ENCODE measurements at regions of chr15 and their contacts with region 1.

Region 1: DNA sequence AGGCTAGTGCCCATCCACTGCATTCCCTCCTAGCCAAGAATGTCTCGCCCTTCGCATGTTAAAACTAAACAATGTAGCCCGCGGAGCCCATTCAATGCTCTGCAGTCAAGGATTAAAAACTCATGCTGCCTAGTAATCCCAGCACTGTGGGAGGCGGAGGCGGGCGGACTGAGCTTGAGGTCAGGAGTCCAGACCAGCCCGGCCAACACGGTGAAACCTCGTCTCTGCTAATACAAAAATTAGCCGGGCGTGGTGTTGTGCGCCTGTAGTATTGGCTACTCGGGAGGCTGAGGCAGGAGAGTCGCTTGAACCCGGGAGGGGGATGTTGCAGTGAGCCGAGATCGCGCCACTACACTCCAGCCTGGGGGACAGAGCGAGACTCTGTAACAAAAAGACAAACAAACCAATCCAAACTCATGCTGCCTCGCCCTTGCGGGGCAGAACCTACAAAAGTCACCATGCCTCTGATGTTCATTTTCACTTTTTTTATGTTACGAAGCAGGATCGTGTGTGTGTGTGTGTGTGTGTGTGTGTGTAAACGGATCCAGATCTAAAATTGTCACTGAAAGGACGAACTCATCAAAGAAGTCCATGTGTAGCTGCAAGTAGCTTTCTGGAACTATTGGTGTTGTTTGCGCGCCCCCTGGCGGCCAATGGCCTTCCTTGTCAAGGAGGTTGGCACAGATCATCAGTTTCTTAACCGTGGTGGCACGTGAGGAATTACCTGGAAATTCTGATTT is 54.8 kb upstream of the SPESP1 start:
- DNase-seq: peak; percentile 91
- H3K4me3 ChIP-seq: peak overlapping the region in 2 of 3 experiments; percentile 6 to 24
- H3K27ac ChIP-seq: no peak overlapping the region
- H3K4me1 ChIP-seq: no peaks in the 10 kb centered on the region
- H3K27me3 ChIP-seq: peaks cover 7 to 9% of the 10 kb centered on the region in 2 experiments
- CTCF ChIP-seq: peak; percentile 83 to 84
- POLR2A ChIP-seq: no peak

Region 2: GRCh38 chr15:68559345-68560310 is 315.9 kb before region 1 on chr15:
- CTCF ChIA-PET with region 1: interaction called, 88 read pairs
- POLR2A ChIA-PET with region 1: interaction called, 4 read pairs
- dilution Hi-C with region 1: no loop called
- intact Hi-C with region 1: loop called (anchors 1 kb)
- DNase-seq: peak; percentile 78
- H3K4me3 ChIP-seq: peak overlapping the region in 2 of 3 experiments; percentile 19 to 46
- H3K27ac ChIP-seq: no peak overlapping the region
- H3K4me1 ChIP-seq: peaks cover 4% of the 10 kb centered on the region
- H3K27me3 ChIP-seq: peaks cover 4 to 7% of the 10 kb centered on the region in 2 experiments
- CTCF ChIP-seq: peak; percentile 98 to 99
- POLR2A ChIP-seq: no peak

Region 3: GRCh38 chr15:68783226-68784058 is 92.1 kb before region 1 on chr15:
- CTCF ChIA-PET with region 1: interaction called, 45 read pairs
- POLR2A ChIA-PET with region 1: no interaction called
- dilution Hi-C with region 1: no loop called
- intact Hi-C with region 1: loop called (anchors 1 kb)
- DNase-seq: peak; percentile 32
- H3K4me3 ChIP-seq: no peak overlapping the region
- H3K27ac ChIP-seq: no peak overlapping the region
- H3K4me1 ChIP-seq: peaks cover 14% of the 10 kb centered on the region
- H3K27me3 ChIP-seq: no peaks in the 10 kb centered on the region
- CTCF ChIP-seq: peak; percentile 39 to 73
- POLR2A ChIP-seq: no peak

Region 4: DNA sequence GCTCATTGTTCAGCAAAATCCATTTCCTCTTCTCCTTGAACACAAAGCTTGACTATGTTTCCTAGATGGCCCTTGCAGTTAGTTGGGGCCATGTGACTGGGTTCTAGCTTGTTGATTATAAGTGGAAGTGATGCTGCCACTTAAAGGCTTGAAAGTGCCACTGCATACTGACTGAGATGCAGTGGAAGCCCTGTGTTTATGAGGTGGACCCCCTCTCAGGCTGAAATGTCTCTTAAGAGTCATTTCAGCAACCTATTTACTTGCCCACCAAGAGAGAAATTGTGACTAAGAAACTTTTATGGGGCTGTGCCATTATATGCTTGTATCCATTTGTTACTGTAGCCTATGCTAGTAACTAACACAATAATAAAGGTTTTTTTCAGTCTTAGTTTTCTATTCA is 46.5 kb before region 1 on chr15:
- CTCF ChIA-PET with region 1: interaction called, 24 read pairs
- POLR2A ChIA-PET with region 1: interaction called, 3 read pairs
- dilution Hi-C with region 1: no loop called
- intact Hi-C with region 1: no loop called
- DNase-seq: peak; percentile 81
- H3K4me3 ChIP-seq: no peak overlapping the region
- H3K27ac ChIP-seq: no peak overlapping the region
- H3K4me1 ChIP-seq: no peaks in the 10 kb centered on the region
- H3K27me3 ChIP-seq: peaks cover 13 to 19% of the 10 kb centered on the region in 2 experiments
- CTCF ChIP-seq: peak; percentile 29 to 57
- POLR2A ChIP-seq: no peak

Region 5: GRCh38 chr15:68862415-68862814 is 13.1 kb before region 1 on chr15:
- CTCF ChIA-PET with region 1: interaction called, 30 read pairs
- POLR2A ChIA-PET with region 1: no interaction called
- dilution Hi-C with region 1: no loop called
- intact Hi-C with region 1: no loop called
- DNase-seq: no peak
- H3K4me3 ChIP-seq: no peak overlapping the region
- H3K27ac ChIP-seq: no peak overlapping the region
- H3K4me1 ChIP-seq: no peaks in the 10 kb centered on the region
- H3K27me3 ChIP-seq: peaks cover 12 to 13% of the 10 kb centered on the region in 2 experiments
- CTCF ChIP-seq: no peak
- POLR2A ChIP-seq: no peak

Region 6: GRCh38 chr15:68983961-68984481 is 108.5 kb after region 1 on chr15:
- CTCF ChIA-PET with region 1: no interaction called
- POLR2A ChIA-PET with region 1: no interaction called
- dilution Hi-C with region 1: no loop called
- intact Hi-C with region 1: no loop called
- DNase-seq: no peak
- H3K4me3 ChIP-seq: no peak overlapping the region
- H3K27ac ChIP-seq: no peak overlapping the region
- H3K4me1 ChIP-seq: no peaks in the 10 kb centered on the region
- H3K27me3 ChIP-seq: peaks cover 0 to 3% of the 10 kb centered on the region in 2 experiments
- CTCF ChIP-seq: no peak
- POLR2A ChIP-seq: no peak

Region 7: GRCh38 chr15:68997930-68998777 is 122.6 kb after region 1 on chr15:
- CTCF ChIA-PET with region 1: no interaction called
- POLR2A ChIA-PET with region 1: no interaction called
- dilution Hi-C with region 1: no loop called
- intact Hi-C with region 1: no loop called
- DNase-seq: no peak
- H3K4me3 ChIP-seq: no peak overlapping the region
- H3K27ac ChIP-seq: no peak overlapping the region
- H3K4me1 ChIP-seq: no peaks in the 10 kb centered on the region
- H3K27me3 ChIP-seq: peaks cover 0 to 5% of the 10 kb centered on the region in 2 experiments
- CTCF ChIP-seq: no peak
- POLR2A ChIP-seq: no peak